GM10248 (cell line): ENCODE measurements at regions of chr1 and their contacts with region 1.

Region 1: GRCh38 chr1:2414083-2414958 is 2.0 kb upstream of the PEX10 start:
- DNase-seq: peak; percentile 86
- CTCF ChIP-seq: peak; percentile 88

Region 2: GRCh38 chr1:2163205-2163604 is 251.1 kb before region 1 on chr1:
- CTCF ChIA-PET with region 1: no interaction called
- POLR2A ChIA-PET with region 1: no interaction called
- DNase-seq: no peak
- CTCF ChIP-seq: no peak

Region 3: GRCh38 chr1:2525920-2526823 is 111.9 kb after region 1 on chr1 and contains the start of gene PANK4:
- CTCF ChIA-PET with region 1: interaction called, 11 read pairs
- POLR2A ChIA-PET with region 1: no interaction called
- DNase-seq: peak; percentile 92
- CTCF ChIP-seq: no peak